ENCODE measurements at regions of chr2 and their contacts with region 1.

Region 1: GRCh38 chr2:69253611-69254288 is 133.3 kb downstream of the GFPT1 start:
- DNase-seq: peak; percentile 97
- H3K4me3 ChIP-seq: no peak overlapping the region
- H3K27ac ChIP-seq: peak overlapping the region; percentile 96
- H3K4me1 ChIP-seq: peaks cover 30% of the 10 kb centered on the region
- H3K27me3 ChIP-seq: no peaks in the 10 kb centered on the region
- CTCF ChIP-seq: no peak
- POLR2A ChIP-seq: peak; percentile 84

Region 2: GRCh38 chr2:68861330-68861729 is 392.4 kb before region 1 on chr2:
- CTCF ChIA-PET with region 1: no interaction called
- POLR2A ChIA-PET with region 1: no interaction called
- dilution Hi-C with region 1: no loop called
- intact Hi-C with region 1: no loop called
- DNase-seq: no peak
- H3K4me3 ChIP-seq: no peak overlapping the region
- H3K27ac ChIP-seq: no peak overlapping the region
- H3K4me1 ChIP-seq: no peaks in the 10 kb centered on the region
- H3K27me3 ChIP-seq: peaks cover 0 to 7% of the 10 kb centered on the region in 2 experiments
- CTCF ChIP-seq: no peak
- POLR2A ChIP-seq: no peak

Region 3: GRCh38 chr2:69026026-69026425 is 227.7 kb before region 1 on chr2:
- CTCF ChIA-PET with region 1: no interaction called
- POLR2A ChIA-PET with region 1: no interaction called
- dilution Hi-C with region 1: no loop called
- intact Hi-C with region 1: loop called (anchors 1 kb)
- DNase-seq: peak; percentile 76
- H3K4me3 ChIP-seq: no peak overlapping the region
- H3K27ac ChIP-seq: no peak overlapping the region
- H3K4me1 ChIP-seq: peaks cover 3% of the 10 kb centered on the region
- H3K27me3 ChIP-seq: peaks cover 0 to 4% of the 10 kb centered on the region in 2 experiments
- CTCF ChIP-seq: peak; percentile 51 to 57
- POLR2A ChIP-seq: no peak

Region 4: DNA sequence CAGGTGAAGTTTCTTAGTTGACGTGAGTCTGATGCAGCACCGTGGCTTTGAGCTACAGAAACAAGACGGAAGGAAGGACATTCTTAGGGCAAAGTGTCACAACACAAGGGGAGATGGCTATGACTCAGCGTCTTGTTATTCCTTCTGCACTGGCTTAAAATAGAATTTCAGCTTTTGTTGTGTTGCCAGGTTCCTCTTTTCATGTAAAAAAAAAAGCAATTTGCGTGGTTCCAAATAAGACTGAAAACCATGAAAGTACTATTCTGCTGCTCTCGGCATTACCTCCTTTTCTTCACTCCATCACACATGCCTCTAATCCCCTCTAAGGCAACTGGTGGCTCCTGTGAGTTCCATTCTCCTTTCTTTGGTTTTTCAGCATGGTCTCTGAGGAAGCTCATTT is 90.6 kb before region 1 on chr2:
- CTCF ChIA-PET with region 1: no interaction called
- POLR2A ChIA-PET with region 1: no interaction called
- dilution Hi-C with region 1: no loop called
- intact Hi-C with region 1: loop called (anchors 1 kb)
- DNase-seq: peak; percentile 68
- H3K4me3 ChIP-seq: no peak overlapping the region
- H3K27ac ChIP-seq: peak overlapping the region; percentile 95
- H3K4me1 ChIP-seq: peaks cover 40% of the 10 kb centered on the region
- H3K27me3 ChIP-seq: no peaks in the 10 kb centered on the region
- CTCF ChIP-seq: no peak
- POLR2A ChIP-seq: no peak

Region 5: GRCh38 chr2:69222953-69223658 is 30.6 kb before region 1 on chr2:
- CTCF ChIA-PET with region 1: no interaction called
- POLR2A ChIA-PET with region 1: no interaction called
- dilution Hi-C with region 1: no loop called
- intact Hi-C with region 1: loop called (anchors 1 kb)
- DNase-seq: peak; percentile 58
- H3K4me3 ChIP-seq: no peak overlapping the region
- H3K27ac ChIP-seq: peak overlapping the region; percentile 30
- H3K4me1 ChIP-seq: peaks cover 21% of the 10 kb centered on the region
- H3K27me3 ChIP-seq: no peaks in the 10 kb centered on the region
- CTCF ChIP-seq: no peak
- POLR2A ChIP-seq: no peak

Region 6: DNA sequence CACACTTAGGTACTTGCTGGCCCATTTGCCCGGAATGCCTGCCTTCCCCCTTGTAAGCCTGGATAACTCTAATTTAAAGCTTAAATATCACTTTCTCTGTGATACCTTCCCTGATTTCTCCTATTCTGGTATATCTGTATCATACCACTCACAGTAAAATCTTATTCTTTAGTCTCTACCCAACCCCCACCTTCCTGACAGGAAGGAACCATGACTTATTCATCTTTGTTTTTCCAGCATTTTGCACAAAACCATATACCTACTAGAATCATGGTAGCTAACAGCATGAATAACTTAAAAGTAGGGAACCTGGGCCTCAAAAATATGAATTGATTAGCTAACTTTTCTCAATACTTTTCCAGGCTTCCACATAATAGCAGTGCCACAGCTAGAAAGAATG is 21.7 kb after region 1 on chr2:
- CTCF ChIA-PET with region 1: no interaction called
- POLR2A ChIA-PET with region 1: interaction called, 3 read pairs
- dilution Hi-C with region 1: no loop called
- intact Hi-C with region 1: loop called (anchors 1 kb)
- DNase-seq: peak; percentile 75
- H3K4me3 ChIP-seq: peak overlapping the region in 1 of 3 experiments; percentile 52
- H3K27ac ChIP-seq: peak overlapping the region; percentile 89
- H3K4me1 ChIP-seq: peaks cover 19% of the 10 kb centered on the region
- H3K27me3 ChIP-seq: no peaks in the 10 kb centered on the region
- CTCF ChIP-seq: no peak
- POLR2A ChIP-seq: no peak

Region 7: GRCh38 chr2:69335311-69335710 is 81.6 kb after region 1 on chr2:
- CTCF ChIA-PET with region 1: no interaction called
- POLR2A ChIA-PET with region 1: no interaction called
- dilution Hi-C with region 1: no loop called
- intact Hi-C with region 1: no loop called
- DNase-seq: no peak
- H3K4me3 ChIP-seq: no peak overlapping the region
- H3K27ac ChIP-seq: no peak overlapping the region
- H3K4me1 ChIP-seq: no peaks in the 10 kb centered on the region
- H3K27me3 ChIP-seq: no peaks in the 10 kb centered on the region
- CTCF ChIP-seq: no peak
- POLR2A ChIP-seq: no peak